ENCODE measurements at regions of chr15 and their contacts with region 1.

Region 1: GRCh38 chr15:45705510-45706473 is 71.0 kb downstream of the SQOR start:
- DNase-seq: peak; percentile 44 to 67
- H3K4me3 ChIP-seq: peak overlapping the region; percentile 73
- H3K27ac ChIP-seq: no peak overlapping the region
- H3K4me1 ChIP-seq: no peaks in the 10 kb centered on the region
- H3K27me3 ChIP-seq: no peaks in the 10 kb centered on the region
- CTCF ChIP-seq: peak; percentile 89

Region 2: DNA sequence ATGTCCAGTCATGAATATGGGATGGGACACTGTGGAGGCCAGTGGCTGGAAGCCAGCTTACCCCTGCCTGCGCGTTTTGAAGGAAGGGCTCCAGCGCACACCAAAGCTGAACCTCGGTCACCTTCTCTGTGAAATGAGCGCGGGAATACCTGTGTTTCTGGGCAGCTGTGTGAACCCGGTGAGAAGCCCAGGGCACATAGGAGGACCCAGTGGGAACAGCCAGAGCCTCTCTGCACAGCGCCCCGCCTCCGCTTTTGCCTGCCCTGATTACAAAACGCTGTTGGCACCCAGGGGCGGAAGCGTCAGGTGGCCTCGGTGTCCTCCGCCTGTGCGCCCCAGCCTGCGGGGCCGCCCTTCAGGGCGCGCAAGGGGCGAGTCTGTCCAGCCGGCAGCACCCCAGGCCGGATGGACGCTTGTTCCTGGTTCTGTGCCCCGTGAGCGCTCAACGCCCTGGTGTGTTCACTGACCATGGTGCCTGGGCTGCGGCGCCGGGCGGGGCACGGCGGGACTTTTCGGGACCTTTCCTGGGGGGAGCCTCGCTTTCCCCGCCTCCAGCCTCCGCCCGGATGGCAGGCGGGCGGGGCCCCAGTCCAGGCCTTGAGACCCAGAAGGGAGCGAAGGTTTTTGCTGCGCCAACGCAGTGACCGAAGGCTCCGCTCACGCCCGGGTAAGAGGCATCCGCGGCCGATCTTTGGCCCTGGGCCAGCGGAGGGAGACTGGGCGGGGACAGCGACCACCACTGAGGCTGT is 71.2 kb before region 1 on chr15 and contains the start of gene SQOR:
- CTCF ChIA-PET with region 1: no interaction called
- POLR2A ChIA-PET with region 1: no interaction called
- intact Hi-C with region 1: loop called (anchors 5 kb)
- DNase-seq: peak; percentile 74 to 90
- H3K4me3 ChIP-seq: peak within 1 kb of the TSS; percentile 91
- H3K27ac ChIP-seq: peak within 1 kb of the TSS; percentile 62
- H3K4me1 ChIP-seq: peaks cover 12% of the 10 kb centered on the region
- H3K27me3 ChIP-seq: no peaks in the 10 kb centered on the region
- CTCF ChIP-seq: no peak
- total RNA-seq, gene SQOR: 40.9 and 42.2 TPM in 2 replicates

Region 3: GRCh38 chr15:46111730-46112129 is 405.9 kb after region 1 on chr15:
- CTCF ChIA-PET with region 1: no interaction called
- POLR2A ChIA-PET with region 1: no interaction called
- intact Hi-C with region 1: no loop called
- DNase-seq: no peak
- H3K4me3 ChIP-seq: no peak overlapping the region
- H3K27ac ChIP-seq: no peak overlapping the region
- H3K4me1 ChIP-seq: no peaks in the 10 kb centered on the region
- H3K27me3 ChIP-seq: no peaks in the 10 kb centered on the region
- CTCF ChIP-seq: no peak